AG04450 (cell line): ENCODE measurements at regions of chr1 and their contacts with region 1.

Region 1: DNA sequence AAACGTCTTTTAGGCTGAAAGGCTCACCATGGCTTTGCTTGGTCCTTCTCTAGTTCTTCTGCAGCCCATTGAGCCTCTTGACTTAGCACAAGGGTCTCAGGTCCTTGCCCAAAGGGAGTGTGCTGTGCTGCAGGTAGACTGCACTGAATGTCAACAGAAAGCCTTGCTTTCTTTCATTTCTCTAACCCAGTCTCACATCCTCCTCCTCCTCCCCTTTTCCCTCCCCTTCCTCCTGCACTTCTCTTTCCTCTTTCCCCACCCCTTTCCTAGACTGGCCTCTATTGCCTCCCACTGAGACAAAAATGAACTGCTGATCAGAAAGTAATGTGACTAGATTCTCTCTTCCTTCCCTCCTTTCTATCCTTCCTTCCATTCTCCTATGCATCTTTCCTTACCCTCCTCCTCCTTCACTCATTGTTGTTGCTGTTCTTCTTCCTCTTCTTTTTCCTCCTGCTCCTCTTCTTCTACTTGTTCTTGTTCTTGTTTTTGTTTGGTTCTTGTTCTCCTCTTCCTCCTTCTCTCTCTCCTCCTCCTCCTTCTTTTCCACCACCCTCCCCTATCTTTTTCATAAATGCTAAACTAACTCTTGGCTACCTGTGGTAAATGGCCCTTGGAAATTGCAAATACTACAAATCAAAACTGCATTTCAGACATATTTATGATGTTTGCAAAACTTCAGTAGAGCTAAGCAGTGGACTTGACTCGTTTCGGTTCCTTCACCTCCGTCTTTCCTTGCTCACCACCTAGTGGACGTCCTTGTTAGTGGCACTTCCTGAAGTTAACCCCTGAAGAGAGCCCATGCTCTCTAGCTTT is at the start of gene SELL:
- DNase-seq: peak; percentile 26
- H3K4me3 ChIP-seq: peak within 1 kb of the TSS; percentile 42
- H3K27ac ChIP-seq: no peak within 1 kb of the TSS
- H3K27me3 ChIP-seq: no peaks in the 10 kb centered on the region
- CTCF ChIP-seq: peak; percentile 88
- polyA plus RNA-seq, gene SELL: 0.05 TPM in 1 of 2 replicates, not detected in the other

Region 2: DNA sequence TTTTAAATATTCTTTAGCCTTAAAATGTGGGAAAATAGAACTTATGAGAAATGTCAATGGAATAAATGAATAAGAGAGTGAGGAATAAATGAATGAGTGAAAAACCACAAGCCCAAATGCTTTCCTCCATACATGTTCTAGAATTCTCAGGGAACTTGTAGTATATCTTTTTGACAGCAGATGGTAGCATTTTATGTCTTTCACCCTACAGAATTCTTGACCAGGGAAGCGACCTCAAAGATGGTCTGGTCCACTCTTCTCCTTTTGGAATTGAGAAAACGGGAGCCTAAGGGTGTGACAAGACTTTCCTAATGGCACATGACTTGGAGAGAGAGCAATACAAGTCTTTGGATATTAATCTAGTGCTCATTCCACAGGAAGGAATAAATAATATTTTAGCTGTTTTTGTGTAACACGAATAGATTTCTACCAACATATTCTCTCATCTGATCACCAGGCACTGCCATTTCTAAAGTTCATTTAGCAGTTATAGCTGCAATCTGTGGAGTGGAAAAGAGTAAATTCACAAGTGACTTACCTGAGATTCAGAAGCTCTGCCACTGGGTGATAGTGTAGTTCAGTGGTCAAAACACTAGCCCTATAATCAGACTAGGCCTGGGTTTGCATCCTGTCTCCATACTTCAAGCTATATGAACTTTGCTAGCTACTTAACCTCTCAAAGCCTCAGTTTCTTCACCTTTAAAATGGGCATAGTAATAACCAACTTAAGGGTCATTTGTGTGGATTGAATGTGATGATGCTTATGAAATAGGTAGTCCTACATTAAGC is 110.4 kb before region 1 on chr1:
- CTCF ChIA-PET with region 1: interaction called, 15 read pairs
- POLR2A ChIA-PET with region 1: no interaction called
- DNase-seq: no peak
- H3K4me3 ChIP-seq: no peak overlapping the region
- H3K27ac ChIP-seq: no peak overlapping the region
- H3K27me3 ChIP-seq: no peaks in the 10 kb centered on the region
- CTCF ChIP-seq: peak; percentile 37; the same call in 1 of the 2 replicates

Region 3: GRCh38 chr1:169701261-169702005 is 10.2 kb before region 1 on chr1:
- CTCF ChIA-PET with region 1: interaction called, 12 read pairs
- POLR2A ChIA-PET with region 1: no interaction called
- DNase-seq: no peak
- H3K4me3 ChIP-seq: no peak overlapping the region
- H3K27ac ChIP-seq: no peak overlapping the region
- H3K27me3 ChIP-seq: no peaks in the 10 kb centered on the region
- CTCF ChIP-seq: no peak

Region 4: GRCh38 chr1:169753552-169753951 is 41.9 kb after region 1 on chr1:
- CTCF ChIA-PET with region 1: no interaction called
- POLR2A ChIA-PET with region 1: no interaction called
- DNase-seq: no peak
- H3K4me3 ChIP-seq: no peak overlapping the region
- H3K27ac ChIP-seq: no peak overlapping the region
- H3K27me3 ChIP-seq: peaks cover 2% of the 10 kb centered on the region
- CTCF ChIP-seq: 0 out of 2 replicates have a peak, but pooled peaks have one; percentile 8

Region 5: DNA sequence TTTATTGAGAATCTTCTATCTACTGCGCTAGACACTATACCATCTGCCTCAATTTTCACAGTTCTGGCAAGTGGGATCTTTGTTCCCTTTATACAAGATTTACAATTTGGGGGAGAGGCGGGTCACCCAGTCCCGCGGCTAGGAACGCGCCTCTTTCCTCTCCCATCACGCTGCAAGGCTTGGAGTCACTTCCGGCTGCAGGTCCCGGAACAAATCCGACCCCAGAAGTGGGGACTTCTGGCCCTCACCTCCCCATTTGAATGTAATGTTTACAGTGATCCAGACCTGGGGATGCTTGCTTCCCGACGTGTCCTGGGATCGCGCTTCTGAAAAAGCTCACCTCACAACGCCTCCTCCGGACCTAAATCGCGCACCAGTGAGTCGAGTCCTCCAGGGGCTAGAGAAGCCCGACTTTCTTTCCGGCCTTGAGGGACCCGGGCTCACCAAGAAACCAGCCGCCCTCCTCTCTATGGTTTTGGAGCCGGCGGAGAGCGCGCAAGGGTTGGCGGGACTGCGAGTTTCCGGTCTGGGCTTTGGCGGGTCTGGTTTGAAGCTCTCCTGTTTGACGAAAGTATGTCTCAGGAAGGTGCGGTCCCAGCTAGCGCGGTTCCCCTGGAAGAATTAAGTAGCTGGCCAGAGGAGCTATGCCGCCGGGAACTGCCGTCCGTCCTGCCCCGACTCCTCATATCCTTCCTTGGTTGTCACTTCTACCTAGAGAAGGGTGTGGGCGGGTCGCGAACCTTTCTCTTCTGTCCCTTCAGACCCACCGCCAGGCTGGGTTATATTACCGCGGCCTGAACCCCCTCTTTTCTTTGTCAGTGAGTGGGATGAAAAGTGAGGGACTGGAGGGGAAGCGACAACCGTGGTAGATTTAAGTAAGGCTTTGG is 83.1 kb after region 1 on chr1 and contains the start of gene METTL18:
- CTCF ChIA-PET with region 1: no interaction called
- POLR2A ChIA-PET with region 1: no interaction called
- DNase-seq: peak; percentile 86
- H3K4me3 ChIP-seq: peak within 1 kb of the TSS; percentile 88
- H3K27ac ChIP-seq: peak within 1 kb of the TSS; percentile 73
- H3K27me3 ChIP-seq: no peaks in the 10 kb centered on the region
- CTCF ChIP-seq: no peak
- polyA plus RNA-seq, gene METTL18: 4.4 and 7.1 TPM in 2 replicates